ENCODE measurements at regions of chr10 and their contacts with region 1.

Region 1: GRCh38 chr10:77104459-77104980 is 533.1 kb downstream of the KCNMA1 start:
- DNase-seq: peak; percentile 90

Region 2: DNA sequence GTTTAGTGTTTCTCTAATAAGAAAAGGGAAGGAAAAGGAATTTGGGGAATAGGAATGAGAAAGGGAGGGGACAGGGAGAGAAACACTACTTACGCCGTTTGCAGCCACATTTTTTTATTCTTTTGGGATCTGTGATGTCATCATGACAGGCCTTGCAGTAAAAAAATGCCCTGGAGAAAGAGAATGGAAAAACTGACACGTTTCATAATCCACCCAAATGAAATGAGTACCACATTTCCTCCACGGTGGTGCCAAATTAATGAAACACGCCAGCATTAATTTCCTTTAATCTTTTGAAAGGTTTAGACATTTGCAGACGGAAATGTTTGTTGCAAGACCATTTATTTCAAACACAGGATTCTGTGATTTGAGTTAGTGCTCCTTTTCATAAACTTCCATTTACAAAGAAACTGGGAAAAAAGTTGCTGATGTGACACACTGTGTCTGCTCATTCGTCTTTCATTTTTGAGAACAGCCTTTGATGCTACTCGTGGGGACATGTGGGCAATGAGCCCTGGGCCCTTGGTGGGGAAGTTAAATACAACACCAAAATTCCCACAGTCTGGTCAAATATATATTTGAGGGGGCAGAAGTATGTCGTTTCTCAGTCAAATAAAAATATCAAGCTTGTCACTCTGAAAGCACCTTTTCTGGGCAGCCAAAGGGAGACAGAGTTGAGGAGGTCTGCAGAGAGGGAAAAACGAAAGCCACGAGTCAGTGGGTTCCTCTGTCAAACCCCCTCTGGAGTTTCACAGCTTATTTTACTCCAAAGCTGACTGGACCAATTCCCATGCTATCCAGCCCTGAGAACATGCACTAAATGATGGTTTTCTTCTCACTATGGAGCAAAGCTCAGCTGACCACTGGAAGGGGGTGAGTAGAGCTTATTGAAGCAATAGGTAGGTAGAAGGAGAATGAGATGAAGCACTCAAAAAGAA is 92.4 kb before region 1 on chr10:
- intact Hi-C with region 1: loop called in 1 of 2 experiments (anchors 10 kb)
- DNase-seq: no peak

Measured in posterior vena cava (tissue), 2 donors.